AG04450 (cell line): ENCODE measurements at regions of chr3 and their contacts with region 1.

Region 1: GRCh38 chr3:124660599-124660998 is 69.7 kb upstream of the UMPS start:
- DNase-seq: no peak
- H3K4me3 ChIP-seq: no peak overlapping the region
- H3K27ac ChIP-seq: no peak overlapping the region
- H3K27me3 ChIP-seq: no peaks in the 10 kb centered on the region
- CTCF ChIP-seq: no peak

Region 2: DNA sequence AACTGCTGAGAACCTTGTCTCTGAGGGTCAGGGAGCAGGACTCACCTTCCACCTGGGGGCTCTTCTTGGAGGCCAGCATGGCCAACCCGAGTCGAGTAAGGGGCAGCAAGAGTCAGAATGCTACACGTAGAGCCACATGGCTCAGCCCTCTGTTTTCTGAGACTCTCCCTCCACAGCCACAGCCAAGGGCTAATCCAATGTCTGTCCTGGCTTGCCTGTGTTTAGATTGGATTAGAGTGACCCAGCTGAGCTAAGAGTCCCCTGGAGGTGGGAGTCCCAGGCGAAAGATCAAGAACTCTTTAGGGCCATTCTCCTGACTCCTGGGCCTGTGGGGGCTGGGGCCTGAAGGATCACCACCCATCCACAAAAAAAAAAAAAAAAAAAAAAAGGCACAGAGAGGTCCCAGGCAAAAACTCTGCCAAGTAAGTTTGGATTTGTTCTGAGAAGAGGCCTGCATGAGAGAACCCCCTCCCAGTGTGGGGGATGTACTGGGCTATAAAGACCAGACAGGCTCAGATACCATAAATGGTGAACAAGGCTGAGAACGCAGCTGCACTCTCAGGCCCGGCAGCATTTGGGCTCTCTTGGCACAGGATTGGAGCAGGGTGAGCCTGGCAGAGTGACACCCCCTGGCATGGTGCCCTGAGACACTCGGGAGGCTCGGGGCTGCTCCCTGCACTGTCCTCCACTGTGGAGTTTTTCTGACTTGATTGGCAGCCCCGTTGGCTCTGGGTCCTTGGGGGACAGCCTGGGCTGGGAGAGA is 1022.6 kb after region 1 on chr3:
- CTCF ChIA-PET with region 1: interaction called, 11 read pairs
- POLR2A ChIA-PET with region 1: no interaction called
- DNase-seq: no peak
- H3K4me3 ChIP-seq: no peak overlapping the region
- H3K27ac ChIP-seq: no peak overlapping the region
- H3K27me3 ChIP-seq: no peaks in the 10 kb centered on the region
- CTCF ChIP-seq: no peak